ENCODE measurements at regions of chr3 and their contacts with region 1.

Region 1: GRCh38 chr3:143895805-143896204 is 47.5 kb upstream of the SLC9A9 start:
- DNase-seq: peak; percentile 26
- H3K4me3 Mint-ChIP-seq: no peak overlapping the region
- H3K27ac Mint-ChIP-seq: no peak overlapping the region
- H3K4me1 Mint-ChIP-seq: peaks cover 7% of the 10 kb centered on the region
- H3K27me3 Mint-ChIP-seq: no peaks in the 10 kb centered on the region
- CTCF ChIP-seq: no peak

Region 2: DNA sequence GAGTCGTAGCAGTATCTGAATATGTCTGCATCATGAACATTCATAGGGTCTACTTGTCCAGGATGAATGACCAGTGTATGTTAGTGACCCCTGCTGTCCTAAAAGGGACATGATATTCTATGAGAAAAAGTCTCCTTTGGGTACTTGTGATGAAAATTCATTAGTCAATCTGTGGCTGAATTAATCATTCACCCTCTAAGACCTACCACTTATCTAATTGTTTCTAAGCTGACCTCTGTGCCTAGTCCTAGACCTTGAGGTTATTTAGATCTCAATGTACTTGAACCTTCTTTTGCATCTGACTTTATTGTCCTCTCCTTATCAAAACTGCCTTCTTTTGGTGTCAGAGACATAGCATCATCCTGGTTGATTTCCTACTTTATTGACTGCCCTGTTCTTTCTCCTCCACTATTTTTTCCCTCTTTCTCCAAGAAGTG is 875.1 kb after region 1 on chr3:
- CTCF ChIA-PET with region 1: interaction called, 3 read pairs
- POLR2A ChIA-PET with region 1: no interaction called
- intact Hi-C with region 1: loop called (anchors 5 kb)
- DNase-seq: peak; percentile 38
- H3K4me3 Mint-ChIP-seq: no peak overlapping the region
- H3K27ac Mint-ChIP-seq: no peak overlapping the region
- H3K4me1 Mint-ChIP-seq: no peaks in the 10 kb centered on the region
- H3K27me3 Mint-ChIP-seq: no peaks in the 10 kb centered on the region
- CTCF ChIP-seq: peak; percentile 32

Region 3: GRCh38 chr3:145767909-145768308 is 1872.1 kb after region 1 on chr3:
- CTCF ChIA-PET with region 1: interaction called, 6 read pairs
- POLR2A ChIA-PET with region 1: no interaction called
- intact Hi-C with region 1: loop called (anchors 1 kb)
- DNase-seq: no peak
- H3K4me3 Mint-ChIP-seq: no peak overlapping the region
- H3K27ac Mint-ChIP-seq: no peak overlapping the region
- H3K4me1 Mint-ChIP-seq: no peaks in the 10 kb centered on the region
- H3K27me3 Mint-ChIP-seq: peaks cover 39% of the 10 kb centered on the region
- CTCF ChIP-seq: peak; percentile 24